ENCODE measurements at regions of chr3 and their contacts with region 1.

Region 1: DNA sequence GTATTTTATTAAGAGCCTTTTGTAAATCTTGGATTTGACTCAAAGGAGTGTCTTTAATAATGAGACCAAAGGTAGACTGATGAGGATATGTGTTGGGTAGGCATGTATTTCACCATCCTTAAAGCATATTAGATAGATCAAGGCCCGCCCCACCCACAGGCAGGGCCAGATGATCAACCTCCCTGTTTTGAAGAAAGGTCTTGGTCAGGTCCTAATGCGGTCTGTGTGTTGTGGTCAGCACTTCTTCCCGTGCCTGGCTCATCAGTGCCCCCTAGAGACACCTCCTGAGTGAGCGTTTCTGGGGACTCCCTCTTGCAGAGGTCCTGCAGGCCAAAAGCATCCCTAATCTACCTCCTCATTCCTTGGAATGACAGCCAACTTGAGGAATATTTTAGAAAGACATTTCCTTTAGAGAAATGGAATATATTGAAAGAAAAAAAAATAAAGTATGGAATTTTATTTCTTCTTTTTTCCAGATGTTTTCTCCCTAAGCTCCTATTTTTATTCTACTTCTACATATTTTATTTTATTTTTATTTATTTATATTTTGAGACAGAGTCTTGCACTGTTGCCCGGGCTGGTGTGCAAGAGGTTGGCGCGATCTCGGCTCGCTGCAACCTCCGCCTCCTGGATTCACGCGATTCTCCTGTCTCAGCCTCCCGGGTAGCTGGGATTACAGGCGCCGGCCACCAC is 6.0 kb downstream of the TM4SF4 start:
- DNase-seq: peak; percentile 64
- H3K4me3 Mint-ChIP-seq: no peak overlapping the region
- H3K27ac Mint-ChIP-seq: no peak overlapping the region
- H3K4me1 Mint-ChIP-seq: no peaks in the 10 kb centered on the region
- H3K27me3 Mint-ChIP-seq: no peaks in the 10 kb centered on the region

Region 2: GRCh38 chr3:148955544-148956346 is 524.7 kb before region 1 on chr3:
- CTCF ChIA-PET with region 1: no interaction called
- intact Hi-C with region 1: loop called (anchors 2 kb)
- DNase-seq: peak; percentile 32
- H3K4me3 Mint-ChIP-seq: no peak overlapping the region
- H3K27ac Mint-ChIP-seq: no peak overlapping the region
- H3K4me1 Mint-ChIP-seq: peaks cover 7% of the 10 kb centered on the region
- H3K27me3 Mint-ChIP-seq: no peaks in the 10 kb centered on the region

Region 3: GRCh38 chr3:149352556-149352955 is 127.9 kb before region 1 on chr3:
- CTCF ChIA-PET with region 1: interaction called, 4 read pairs
- intact Hi-C with region 1: loop called (anchors 1 kb)
- DNase-seq: peak; percentile 33
- H3K4me3 Mint-ChIP-seq: no peak overlapping the region
- H3K27ac Mint-ChIP-seq: no peak overlapping the region
- H3K4me1 Mint-ChIP-seq: no peaks in the 10 kb centered on the region
- H3K27me3 Mint-ChIP-seq: peaks cover 6% of the 10 kb centered on the region

Region 4: GRCh38 chr3:149393345-149394160 is 86.9 kb before region 1 on chr3:
- CTCF ChIA-PET with region 1: interaction called, 4 read pairs
- intact Hi-C with region 1: loop called (anchors 1 kb)
- DNase-seq: peak; percentile 66
- H3K4me3 Mint-ChIP-seq: no peak overlapping the region
- H3K27ac Mint-ChIP-seq: no peak overlapping the region
- H3K4me1 Mint-ChIP-seq: no peaks in the 10 kb centered on the region
- H3K27me3 Mint-ChIP-seq: peaks cover 7% of the 10 kb centered on the region

Region 5: GRCh38 chr3:149566292-149566975 is 86.0 kb after region 1 on chr3:
- CTCF ChIA-PET with region 1: no interaction called
- intact Hi-C with region 1: no loop called
- DNase-seq: no peak
- H3K4me3 Mint-ChIP-seq: no peak overlapping the region
- H3K27ac Mint-ChIP-seq: no peak overlapping the region
- H3K4me1 Mint-ChIP-seq: no peaks in the 10 kb centered on the region
- H3K27me3 Mint-ChIP-seq: no peaks in the 10 kb centered on the region

Measured in activated naive CD4-positive, alpha-beta T cell treated with anti-CD3 and anti-CD28 coated beads for 36 hours (primary cell).